PC-3 (cell line): ENCODE measurements at regions of chr5 and their contacts with region 1.

Region 1: GRCh38 chr5:126544087-126544740 is 50.8 kb downstream of the ALDH7A1 start:
- DNase-seq: peak; percentile 44
- ATAC-seq: peak; percentile 58
- H3K4me3 ChIP-seq: no peak overlapping the region
- H3K27ac ChIP-seq: no peak overlapping the region
- H3K4me1 ChIP-seq: no peaks in the 10 kb centered on the region
- H3K27me3 ChIP-seq: no peaks in the 10 kb centered on the region
- CTCF ChIP-seq: peak; percentile 62

Region 2: DNA sequence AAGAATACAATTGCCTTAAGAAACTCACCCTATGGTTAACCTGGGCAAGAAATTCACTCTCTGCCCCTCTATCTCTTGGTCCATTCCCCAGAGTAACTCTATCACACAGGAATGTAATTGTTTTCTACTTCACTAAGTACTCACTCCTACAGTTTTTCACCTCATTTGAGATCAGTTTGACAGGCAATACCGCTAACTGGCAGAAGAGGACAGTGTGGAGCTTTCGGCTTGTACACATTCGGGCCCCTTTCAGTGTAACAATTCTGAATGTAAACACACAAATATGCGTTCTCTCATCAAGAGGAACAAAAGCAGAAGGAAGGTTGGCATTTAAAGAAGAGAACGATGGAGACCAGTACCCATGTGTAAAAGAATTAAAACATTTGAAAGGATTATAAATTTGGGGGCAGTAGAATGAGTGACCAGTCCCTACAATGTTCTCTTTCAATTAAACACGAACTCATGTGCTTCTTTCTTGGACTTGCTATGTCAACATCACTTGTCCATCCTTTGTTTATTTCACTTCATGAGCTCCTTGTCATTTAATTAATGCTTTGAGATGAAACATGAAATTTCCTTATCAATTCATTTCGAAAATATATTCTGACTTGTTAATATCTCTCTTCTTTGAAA is 309.5 kb before region 1 on chr5:
- CTCF ChIA-PET with region 1: no interaction called
- POLR2A ChIA-PET with region 1: no interaction called
- intact Hi-C with region 1: loop called (anchors 1 kb)
- DNase-seq: peak; percentile 60
- ATAC-seq: peak; percentile 79
- H3K4me3 ChIP-seq: peak overlapping the region; percentile 32; the same call in 1 of the 2 replicates
- H3K27ac ChIP-seq: no peak overlapping the region
- H3K4me1 ChIP-seq: no peaks in the 10 kb centered on the region; the same call in 1 of the 2 replicates
- H3K27me3 ChIP-seq: no peaks in the 10 kb centered on the region
- CTCF ChIP-seq: peak; percentile 86

Region 3: DNA sequence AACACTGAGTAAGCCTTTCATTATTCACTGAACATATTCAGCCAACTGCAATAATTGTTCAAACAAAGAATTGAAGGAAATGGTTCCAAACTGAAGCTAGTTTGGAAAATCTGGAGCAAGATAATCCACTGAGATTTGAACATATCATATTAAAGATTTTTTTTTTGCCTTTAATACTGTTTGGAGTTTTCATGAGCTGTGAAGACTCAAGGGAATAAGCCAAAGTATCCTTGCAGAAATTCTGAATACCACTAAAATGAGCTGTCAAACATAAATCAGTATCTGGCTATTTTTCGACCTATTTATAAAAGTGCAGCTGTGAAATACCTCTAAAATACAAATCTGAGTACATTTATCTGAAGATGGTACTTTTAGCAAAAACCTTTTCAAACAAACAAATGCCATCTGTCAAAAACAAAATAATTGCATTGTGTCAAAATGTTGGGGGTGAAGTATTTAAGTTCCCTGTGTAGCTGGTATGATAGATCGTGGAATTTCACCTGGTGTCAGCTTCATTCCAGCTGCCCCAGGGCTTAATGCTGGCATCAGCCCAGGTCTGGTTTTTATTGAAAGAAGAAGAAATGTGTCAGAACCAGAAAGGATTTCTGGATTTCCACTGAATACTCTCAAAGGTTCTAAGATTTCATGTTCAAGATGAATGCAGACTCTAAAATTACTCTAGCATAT is 270.0 kb before region 1 on chr5:
- CTCF ChIA-PET with region 1: no interaction called
- POLR2A ChIA-PET with region 1: no interaction called
- intact Hi-C with region 1: no loop called
- DNase-seq: peak; percentile 39
- ATAC-seq: no peak
- H3K4me3 ChIP-seq: no peak overlapping the region
- H3K27ac ChIP-seq: no peak overlapping the region
- H3K4me1 ChIP-seq: no peaks in the 10 kb centered on the region
- H3K27me3 ChIP-seq: no peaks in the 10 kb centered on the region
- CTCF ChIP-seq: no peak

Region 4: DNA sequence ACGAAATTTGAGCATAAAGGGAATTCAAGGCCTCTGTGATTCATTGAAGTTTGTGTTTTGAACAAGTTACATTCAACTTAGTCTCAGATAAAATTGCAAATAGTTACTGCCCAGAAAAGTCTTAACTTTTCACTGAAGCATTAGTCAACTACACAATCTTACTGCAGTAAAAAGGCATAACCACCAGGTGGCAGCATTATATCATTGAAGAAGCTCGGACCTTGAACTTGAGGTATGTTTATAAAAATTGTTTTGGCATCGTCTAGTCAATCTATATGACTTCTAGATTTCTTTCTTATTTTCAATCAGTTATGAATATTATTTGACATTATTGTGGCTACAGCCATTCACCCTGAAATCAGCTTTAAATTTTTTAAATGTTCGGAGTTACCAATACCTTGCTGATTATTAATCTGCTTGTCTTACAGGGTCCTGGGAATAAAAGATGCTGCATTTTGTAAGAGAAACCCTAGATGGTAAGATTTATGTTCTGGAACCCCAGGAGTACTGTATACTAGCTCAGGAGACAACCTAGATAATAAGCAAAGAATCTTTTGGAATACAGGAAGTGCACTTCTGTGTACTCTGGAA is 204.9 kb before region 1 on chr5:
- CTCF ChIA-PET with region 1: interaction called, 16 read pairs
- POLR2A ChIA-PET with region 1: no interaction called
- intact Hi-C with region 1: loop called (anchors 1 kb)
- DNase-seq: peak; percentile 82
- ATAC-seq: peak; percentile 48
- H3K4me3 ChIP-seq: no peak overlapping the region
- H3K27ac ChIP-seq: no peak overlapping the region
- H3K4me1 ChIP-seq: peaks cover 34% of the 10 kb centered on the region
- H3K27me3 ChIP-seq: no peaks in the 10 kb centered on the region
- CTCF ChIP-seq: peak; percentile 88

Region 5: GRCh38 chr5:126384985-126385384 is 159.2 kb before region 1 on chr5:
- CTCF ChIA-PET with region 1: no interaction called
- POLR2A ChIA-PET with region 1: interaction called, 13 read pairs
- intact Hi-C with region 1: no loop called
- DNase-seq: peak; percentile 85
- ATAC-seq: peak; percentile 76
- H3K4me3 ChIP-seq: peak overlapping the region; percentile 41
- H3K27ac ChIP-seq: peak overlapping the region; percentile 80
- H3K4me1 ChIP-seq: peaks cover 44% of the 10 kb centered on the region
- H3K27me3 ChIP-seq: no peaks in the 10 kb centered on the region
- CTCF ChIP-seq: no peak

Region 6: GRCh38 chr5:126594676-126595485 is 50.7 kb after region 1 on chr5 and contains the start of gene ALDH7A1:
- CTCF ChIA-PET with region 1: interaction called, 8 read pairs
- POLR2A ChIA-PET with region 1: no interaction called
- intact Hi-C with region 1: loop called (anchors 5 kb)
- DNase-seq: peak; percentile 91
- ATAC-seq: peak; percentile 81
- H3K4me3 ChIP-seq: peak within 1 kb of the TSS; percentile 76
- H3K27ac ChIP-seq: peak within 1 kb of the TSS; percentile 49
- H3K4me1 ChIP-seq: peaks cover 18% of the 10 kb centered on the region
- H3K27me3 ChIP-seq: no peaks in the 10 kb centered on the region
- CTCF ChIP-seq: peak; percentile 59
- total RNA-seq, gene ALDH7A1: 45.8 and 45.9 TPM in 2 replicates

Region 7: GRCh38 chr5:127163750-127164149 is 619.5 kb after region 1 on chr5:
- CTCF ChIA-PET with region 1: no interaction called
- POLR2A ChIA-PET with region 1: no interaction called
- intact Hi-C with region 1: no loop called
- DNase-seq: no peak
- ATAC-seq: no peak
- H3K4me3 ChIP-seq: no peak overlapping the region
- H3K27ac ChIP-seq: no peak overlapping the region
- H3K4me1 ChIP-seq: no peaks in the 10 kb centered on the region
- H3K27me3 ChIP-seq: 0 out of 2 replicates have a peak, but pooled peaks cover 3% of the 10 kb centered on the region
- CTCF ChIP-seq: no peak